Activated CD4-positive, alpha-beta T cell treated with anti-CD3 and anti-CD28 coated beads, Interleukin-2, amount 10 ng/mL, durations not matched to agents 24 days and 14 days (primary cell): ENCODE measurements at regions of chr15 and their contacts with region 1.

Region 1: GRCh38 chr15:101088788-101089583 is 162.9 kb downstream of the CHSY1 start:
- DNase-seq: peak; percentile 95
- H3K4me3 Mint-ChIP-seq: no peak overlapping the region
- H3K27ac Mint-ChIP-seq: no peak overlapping the region
- H3K4me1 Mint-ChIP-seq: peaks cover 9% of the 10 kb centered on the region
- H3K27me3 Mint-ChIP-seq: peaks cover under 1% of the 10 kb centered on the region

Region 2: GRCh38 chr15:101014921-101015841 is 73.8 kb before region 1 on chr15:
- intact Hi-C with region 1: loop called (anchors 5 kb)
- DNase-seq: peak; percentile 91
- H3K4me3 Mint-ChIP-seq: no peak overlapping the region
- H3K27ac Mint-ChIP-seq: no peak overlapping the region
- H3K4me1 Mint-ChIP-seq: peaks cover 2% of the 10 kb centered on the region
- H3K27me3 Mint-ChIP-seq: peaks cover 5% of the 10 kb centered on the region

Region 3: GRCh38 chr15:101035611-101036010 is 53.4 kb before region 1 on chr15:
- intact Hi-C with region 1: no loop called
- DNase-seq: no peak
- H3K4me3 Mint-ChIP-seq: no peak overlapping the region
- H3K27ac Mint-ChIP-seq: no peak overlapping the region
- H3K4me1 Mint-ChIP-seq: peaks cover 2% of the 10 kb centered on the region
- H3K27me3 Mint-ChIP-seq: peaks cover 62% of the 10 kb centered on the region

Region 4: GRCh38 chr15:101070502-101071273 is 18.3 kb before region 1 on chr15:
- intact Hi-C with region 1: no loop called
- DNase-seq: no peak
- H3K4me3 Mint-ChIP-seq: peak overlapping the region; percentile 42
- H3K27ac Mint-ChIP-seq: peak overlapping the region; percentile 90
- H3K4me1 Mint-ChIP-seq: peaks cover 9% of the 10 kb centered on the region
- H3K27me3 Mint-ChIP-seq: peaks cover 3% of the 10 kb centered on the region